HCT116 (cell line): ENCODE measurements at regions of chr5 and their contacts with region 1.

Region 1: GRCh38 chr5:91499943-91500531 is 116.9 kb upstream of the ARRDC3 start:
- DNase-seq: peak; percentile 42
- ATAC-seq: peak; percentile 67
- H3K4me3 ChIP-seq: no peak overlapping the region
- H3K27ac ChIP-seq: no peak overlapping the region
- H3K4me1 ChIP-seq: no peaks in the 10 kb centered on the region
- H3K27me3 ChIP-seq: no peaks in the 10 kb centered on the region
- CTCF ChIP-seq: peak; percentile 31 to 73 (median 37); a peak in 5 of 6 replicates
- POLR2A ChIP-seq: no peak
- RAD21 ChIP-seq: peak; percentile 73

Region 2: GRCh38 chr5:91311697-91312501 is 188.1 kb before region 1 on chr5:
- CTCF ChIA-PET with region 1: no interaction called
- POLR2A ChIA-PET with region 1: no interaction called
- RAD21 ChIA-PET with region 1: no interaction called
- intact Hi-C with region 1: no loop called
- DNase-seq: peak; percentile 91
- ATAC-seq: peak; percentile 76
- H3K4me3 ChIP-seq: peak overlapping the region; percentile 0 to 32; a peak in 3 of 4 replicates
- H3K27ac ChIP-seq: peak overlapping the region; percentile 59
- H3K4me1 ChIP-seq: peaks cover 34 to 63% of the 10 kb centered on the region in 2 experiments
- H3K27me3 ChIP-seq: no peaks in the 10 kb centered on the region
- CTCF ChIP-seq: no peak
- POLR2A ChIP-seq: no peak
- RAD21 ChIP-seq: no peak

Region 3: DNA sequence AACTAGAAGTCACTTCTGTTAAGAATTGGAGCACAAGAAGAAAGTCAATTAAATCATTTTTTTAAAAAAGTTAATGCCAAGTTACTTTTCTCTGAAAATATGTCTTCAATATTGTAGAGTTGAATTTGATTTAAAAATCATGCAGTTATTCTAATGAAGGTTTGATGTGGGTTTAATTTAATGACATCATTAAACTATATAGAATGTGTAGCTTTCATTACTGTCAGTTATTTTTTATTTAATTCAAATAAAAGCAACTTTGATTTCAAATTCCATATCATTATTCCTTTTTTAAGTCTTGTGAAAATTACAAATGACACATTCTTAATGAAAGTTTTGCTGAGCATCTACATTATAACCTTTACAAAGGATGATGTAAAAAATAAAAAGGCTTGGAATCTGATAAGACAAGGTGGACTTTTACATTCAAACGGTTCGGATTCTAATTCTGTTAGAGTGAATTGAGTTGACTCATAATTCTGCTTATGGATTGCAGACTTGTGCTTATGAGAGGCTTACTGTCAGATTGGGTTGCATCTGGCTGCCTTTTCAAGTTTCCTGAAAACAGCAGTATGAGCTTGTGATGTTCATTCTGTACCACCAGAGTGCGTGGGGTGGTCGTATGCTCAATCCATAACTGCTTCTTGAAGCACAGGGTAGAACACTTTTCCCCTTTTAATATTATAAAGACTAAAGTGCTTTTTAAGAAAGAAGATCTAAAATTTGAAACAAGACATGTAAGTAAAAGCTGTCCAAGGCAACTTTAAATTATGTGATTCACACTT is 136.1 kb after region 1 on chr5:
- CTCF ChIA-PET with region 1: interaction called, 4 read pairs
- POLR2A ChIA-PET with region 1: no interaction called
- RAD21 ChIA-PET with region 1: no interaction called
- intact Hi-C with region 1: loop called (anchors 5 kb)
- DNase-seq: no peak
- ATAC-seq: peak; percentile 67; the same call in 1 of the 2 replicates
- H3K4me3 ChIP-seq: no peak overlapping the region
- H3K27ac ChIP-seq: no peak overlapping the region
- H3K4me1 ChIP-seq: no peaks in the 10 kb centered on the region
- H3K27me3 ChIP-seq: no peaks in the 10 kb centered on the region
- CTCF ChIP-seq: peak in 2 of 3 experiments; percentile 13 to 31; a peak in 1 of 6 replicates
- POLR2A ChIP-seq: no peak
- RAD21 ChIP-seq: 0 out of 2 replicates have a peak, but pooled peaks have one; percentile 12

Region 4: DNA sequence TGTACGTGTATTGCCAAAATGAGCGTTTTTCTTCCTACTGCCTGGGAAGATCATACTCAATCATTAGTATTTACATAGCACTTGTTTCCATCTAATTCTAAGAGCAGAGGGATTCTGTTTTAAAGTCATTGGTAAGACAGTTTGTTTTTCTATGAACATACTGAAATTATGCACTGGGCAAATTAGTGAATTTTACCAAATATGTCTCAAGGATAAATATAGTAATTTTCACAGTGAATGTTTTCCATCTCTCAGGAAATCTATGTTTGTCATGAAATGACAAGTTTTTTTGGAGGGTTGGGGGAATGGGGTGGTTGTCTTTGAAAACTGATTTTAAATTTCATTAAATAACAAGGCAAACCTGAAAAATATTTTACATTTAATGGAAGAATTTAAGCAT is 324.4 kb after region 1 on chr5:
- CTCF ChIA-PET with region 1: no interaction called
- POLR2A ChIA-PET with region 1: no interaction called
- RAD21 ChIA-PET with region 1: no interaction called
- intact Hi-C with region 1: no loop called
- DNase-seq: no peak
- ATAC-seq: no peak
- H3K4me3 ChIP-seq: no peak overlapping the region
- H3K27ac ChIP-seq: no peak overlapping the region
- H3K4me1 ChIP-seq: no peaks in the 10 kb centered on the region
- H3K27me3 ChIP-seq: no peaks in the 10 kb centered on the region
- CTCF ChIP-seq: no peak
- POLR2A ChIP-seq: no peak
- RAD21 ChIP-seq: no peak

Region 5: GRCh38 chr5:91928754-91929521 is 428.9 kb after region 1 on chr5:
- CTCF ChIA-PET with region 1: no interaction called
- POLR2A ChIA-PET with region 1: no interaction called
- RAD21 ChIA-PET with region 1: no interaction called
- intact Hi-C with region 1: loop called (anchors 10 kb)
- DNase-seq: peak; percentile 10
- ATAC-seq: peak; percentile 62
- H3K4me3 ChIP-seq: no peak overlapping the region
- H3K27ac ChIP-seq: no peak overlapping the region
- H3K4me1 ChIP-seq: no peaks in the 10 kb centered on the region
- H3K27me3 ChIP-seq: no peaks in the 10 kb centered on the region
- CTCF ChIP-seq: peak; percentile 27 to 69 (median 48); a peak in 3 of 6 replicates
- POLR2A ChIP-seq: no peak
- RAD21 ChIP-seq: peak; percentile 71

Region 6: DNA sequence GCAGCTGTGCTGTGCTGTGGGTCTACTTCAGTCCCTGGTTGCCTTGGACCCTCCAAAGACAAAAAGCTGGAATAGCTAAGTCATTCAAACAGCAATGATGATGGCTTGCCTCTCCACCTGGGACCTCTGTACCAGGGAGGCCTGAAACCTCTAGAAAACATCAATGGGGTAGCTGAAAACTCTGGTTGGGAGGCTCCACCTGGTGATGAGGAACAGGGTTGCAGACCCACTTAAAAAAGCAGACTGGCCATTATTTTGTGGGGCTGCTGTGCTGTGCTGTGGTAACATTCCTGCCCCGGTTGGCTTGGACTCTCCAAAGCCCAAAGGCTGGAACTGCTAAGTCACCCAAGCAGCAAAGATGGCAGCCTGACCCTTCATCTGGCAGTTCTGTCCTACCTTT is 722.4 kb after region 1 on chr5:
- CTCF ChIA-PET with region 1: interaction called, 4 read pairs
- POLR2A ChIA-PET with region 1: no interaction called
- RAD21 ChIA-PET with region 1: no interaction called
- intact Hi-C with region 1: loop called (anchors 2 kb)
- DNase-seq: peak; percentile 12
- ATAC-seq: peak; percentile 68
- H3K4me3 ChIP-seq: no peak overlapping the region
- H3K27ac ChIP-seq: no peak overlapping the region
- H3K4me1 ChIP-seq: no peaks in the 10 kb centered on the region
- H3K27me3 ChIP-seq: no peaks in the 10 kb centered on the region
- CTCF ChIP-seq: peak; percentile 40 to 52 (median 42); a peak in 4 of 6 replicates
- POLR2A ChIP-seq: no peak
- RAD21 ChIP-seq: peak; percentile 67

Region 7: DNA sequence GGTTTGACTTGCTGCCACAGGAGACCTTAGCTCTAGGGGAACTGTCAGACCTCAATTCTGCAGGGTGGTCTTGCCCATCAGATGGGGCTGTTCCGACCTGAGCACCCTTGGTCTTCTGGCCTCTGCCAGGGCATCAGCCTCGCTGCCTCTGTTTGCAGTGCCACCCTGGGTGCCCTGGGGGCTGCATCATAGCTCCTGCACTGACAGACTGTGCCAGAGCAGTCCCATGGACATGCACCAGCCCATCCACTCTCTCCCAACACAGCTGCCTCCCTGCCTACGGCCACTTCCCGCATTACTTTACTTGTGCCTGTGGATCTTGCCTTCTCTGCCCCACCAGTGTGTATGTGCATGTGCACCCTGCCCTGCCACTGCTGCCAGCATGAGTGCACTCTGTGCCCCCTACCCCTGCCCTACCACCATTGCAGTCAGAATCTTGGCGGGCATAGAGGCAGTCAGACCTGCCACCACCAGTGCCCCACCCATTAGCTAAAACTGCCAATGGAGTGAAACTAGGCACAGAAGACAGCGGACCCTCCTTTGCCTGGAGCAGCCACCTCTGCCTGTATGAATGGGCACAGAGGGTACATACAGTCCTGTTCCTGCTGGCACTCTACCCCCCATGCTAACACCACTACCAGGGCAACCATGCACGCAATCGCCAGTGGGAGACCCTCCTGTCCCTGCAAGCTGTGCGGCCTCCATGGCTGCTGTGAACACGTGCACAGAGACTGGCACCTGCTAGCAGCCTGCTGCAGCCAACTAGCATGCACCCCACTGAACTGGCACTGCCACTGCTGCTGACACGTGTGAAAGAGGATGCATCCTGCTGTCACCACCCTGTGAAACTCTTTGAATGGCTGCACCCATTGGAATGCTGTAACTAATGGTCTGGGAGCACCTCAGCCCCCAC is 768.0 kb after region 1 on chr5:
- CTCF ChIA-PET with region 1: no interaction called
- POLR2A ChIA-PET with region 1: no interaction called
- RAD21 ChIA-PET with region 1: no interaction called
- intact Hi-C with region 1: no loop called
- DNase-seq: no peak
- ATAC-seq: no peak
- H3K4me3 ChIP-seq: no peak overlapping the region
- H3K27ac ChIP-seq: no peak overlapping the region
- H3K4me1 ChIP-seq: no peaks in the 10 kb centered on the region
- H3K27me3 ChIP-seq: no peaks in the 10 kb centered on the region
- CTCF ChIP-seq: no peak
- POLR2A ChIP-seq: no peak
- RAD21 ChIP-seq: no peak